Mammary epithelial cell (primary cell): ENCODE measurements at regions of chrX and their contacts with region 1.

Region 1: GRCh38 chrX:72714476-72714916 is 390 bp upstream of the PHKA1 start:
- DNase-seq: peak; percentile 51
- H3K4me3 ChIP-seq: peak overlapping the region; percentile 48 to 59 (median 57)
- H3K27ac ChIP-seq: peak overlapping the region; percentile 29
- H3K4me1 ChIP-seq: no peaks in the 10 kb centered on the region
- H3K27me3 ChIP-seq: no peaks in the 10 kb centered on the region
- CTCF ChIP-seq: no peak

Region 2: DNA sequence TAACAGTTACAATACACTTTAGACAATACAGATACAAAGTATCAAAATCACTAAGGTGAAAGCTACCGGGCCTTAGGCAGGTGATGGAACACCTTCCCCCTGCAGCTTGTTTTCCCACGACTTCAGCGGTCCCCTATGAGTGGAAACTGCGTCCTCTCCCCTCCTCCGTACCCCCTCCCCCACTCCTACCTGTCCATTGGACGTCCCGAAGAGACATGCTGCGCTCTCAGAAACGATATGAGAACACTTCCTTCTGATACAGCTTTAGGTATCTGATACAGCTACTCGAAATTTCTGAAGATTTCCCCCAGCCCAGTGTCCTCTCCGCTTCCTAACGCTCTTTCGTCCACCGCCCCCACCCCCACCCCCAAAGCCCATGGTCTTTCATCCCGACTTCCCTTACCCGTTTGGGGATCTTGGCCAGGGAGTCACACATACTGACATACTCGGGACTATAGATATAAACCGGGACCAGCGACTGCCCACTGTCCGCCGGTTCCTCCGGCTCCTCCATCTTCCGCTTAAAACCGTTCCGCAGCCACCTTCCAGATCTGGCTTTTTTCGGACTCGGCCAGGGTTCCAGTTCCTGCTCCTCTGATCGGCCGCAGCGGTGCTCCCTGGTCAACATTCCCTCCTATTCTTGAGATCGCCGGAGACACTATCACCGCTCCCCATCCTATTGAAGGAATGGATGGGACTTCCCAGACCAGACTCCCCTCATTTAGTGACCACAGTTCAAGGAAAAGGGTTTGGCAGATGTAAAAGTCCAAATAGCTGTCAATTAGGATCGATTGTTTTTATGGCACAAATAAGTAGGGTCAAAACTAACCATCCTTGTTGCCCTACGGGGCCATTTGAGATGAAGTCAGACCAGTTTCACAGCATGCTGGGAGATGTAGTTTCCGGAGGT is 142.0 kb before region 1 on chrX and contains the start of gene HDAC8:
- CTCF ChIA-PET with region 1: no interaction called
- dilution Hi-C with region 1: no loop called
- in situ Hi-C with region 1: no loop called
- intact Hi-C with region 1: loop called (anchors 5 kb)
- DNase-seq: peak; percentile 72
- H3K4me3 ChIP-seq: peak within 1 kb of the TSS; percentile 54 to 62 (median 57)
- H3K27ac ChIP-seq: peak within 1 kb of the TSS; percentile 56
- H3K4me1 ChIP-seq: no peaks in the 10 kb centered on the region
- H3K27me3 ChIP-seq: no peaks in the 10 kb centered on the region
- CTCF ChIP-seq: no peak
- total RNA-seq, gene HDAC8: 22.7 to 25.4 TPM

Region 3: DNA sequence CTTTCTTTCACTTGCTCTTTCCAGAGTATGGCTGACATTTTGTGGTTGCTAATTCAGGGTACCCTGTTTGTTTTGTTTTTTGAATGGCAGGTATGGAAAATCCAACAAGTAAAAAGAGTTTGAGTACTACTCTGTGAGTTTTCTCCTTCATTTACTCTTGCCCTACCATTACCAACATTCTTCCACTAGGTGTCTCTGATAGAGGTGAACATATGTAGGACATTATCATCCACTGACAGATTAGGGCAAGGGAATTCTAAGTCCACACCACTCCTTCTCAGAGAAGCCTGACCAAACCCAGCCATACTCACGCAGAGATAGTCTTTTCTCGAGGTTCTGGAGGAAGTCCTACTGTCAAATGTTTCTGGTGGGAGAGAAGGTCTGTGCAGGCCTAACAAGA is 105.2 kb before region 1 on chrX:
- CTCF ChIA-PET with region 1: no interaction called
- dilution Hi-C with region 1: no loop called
- in situ Hi-C with region 1: no loop called
- intact Hi-C with region 1: loop called (anchors 5 kb)
- DNase-seq: peak; percentile 7
- H3K4me3 ChIP-seq: no peak overlapping the region
- H3K27ac ChIP-seq: no peak overlapping the region
- H3K4me1 ChIP-seq: no peaks in the 10 kb centered on the region
- H3K27me3 ChIP-seq: no peaks in the 10 kb centered on the region
- CTCF ChIP-seq: peak; percentile 39 to 59

Region 4: GRCh38 chrX:72620550-72621145 is 93.8 kb before region 1 on chrX:
- CTCF ChIA-PET with region 1: no interaction called
- dilution Hi-C with region 1: no loop called
- in situ Hi-C with region 1: no loop called
- intact Hi-C with region 1: loop called (anchors 5 kb)
- DNase-seq: peak; percentile 77
- H3K4me3 ChIP-seq: no peak overlapping the region
- H3K27ac ChIP-seq: peak overlapping the region; percentile 80
- H3K4me1 ChIP-seq: peaks cover 30% of the 10 kb centered on the region
- H3K27me3 ChIP-seq: no peaks in the 10 kb centered on the region
- CTCF ChIP-seq: no peak

Region 5: DNA sequence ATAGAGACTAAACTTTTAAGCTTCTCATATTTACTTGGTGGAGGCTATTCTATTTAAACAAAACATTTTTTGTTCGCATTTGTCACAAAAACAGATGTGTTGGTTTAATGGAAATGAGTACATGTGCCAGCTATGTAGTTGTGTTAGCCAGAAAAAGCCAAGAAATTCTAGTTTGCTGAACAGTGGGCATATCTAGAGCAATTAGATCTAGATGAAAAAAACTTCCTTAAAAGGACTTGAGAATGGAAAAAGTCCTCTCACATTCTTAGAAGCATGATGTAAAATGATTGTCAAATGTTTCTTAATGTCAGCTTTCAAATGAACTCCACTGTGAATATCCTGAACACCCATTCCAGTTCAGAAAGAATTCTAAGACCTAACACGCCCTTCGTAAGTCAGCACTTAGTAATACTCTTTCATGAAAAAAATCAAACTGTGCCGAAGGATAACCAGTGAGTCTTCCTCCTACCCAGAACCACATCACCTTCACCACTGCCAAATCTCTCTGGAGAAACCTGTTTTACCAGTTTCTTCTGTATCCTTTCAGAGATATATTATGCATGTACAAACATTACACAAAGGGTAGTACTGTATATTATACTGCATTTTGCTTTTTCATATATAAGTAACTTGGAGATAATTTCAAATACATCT is 28.6 kb before region 1 on chrX:
- CTCF ChIA-PET with region 1: no interaction called
- dilution Hi-C with region 1: no loop called
- in situ Hi-C with region 1: no loop called
- intact Hi-C with region 1: loop called (anchors 2 kb)
- DNase-seq: peak; percentile 92
- H3K4me3 ChIP-seq: peak overlapping the region in 2 of 3 experiments; percentile 23 to 29
- H3K27ac ChIP-seq: peak overlapping the region; percentile 87
- H3K4me1 ChIP-seq: peaks cover 5% of the 10 kb centered on the region
- H3K27me3 ChIP-seq: peaks cover 1% of the 10 kb centered on the region
- CTCF ChIP-seq: no peak